Sigmoid colon (tissue), 7 donors: ENCODE measurements at regions of chr5 and their contacts with region 1.

Region 1: DNA sequence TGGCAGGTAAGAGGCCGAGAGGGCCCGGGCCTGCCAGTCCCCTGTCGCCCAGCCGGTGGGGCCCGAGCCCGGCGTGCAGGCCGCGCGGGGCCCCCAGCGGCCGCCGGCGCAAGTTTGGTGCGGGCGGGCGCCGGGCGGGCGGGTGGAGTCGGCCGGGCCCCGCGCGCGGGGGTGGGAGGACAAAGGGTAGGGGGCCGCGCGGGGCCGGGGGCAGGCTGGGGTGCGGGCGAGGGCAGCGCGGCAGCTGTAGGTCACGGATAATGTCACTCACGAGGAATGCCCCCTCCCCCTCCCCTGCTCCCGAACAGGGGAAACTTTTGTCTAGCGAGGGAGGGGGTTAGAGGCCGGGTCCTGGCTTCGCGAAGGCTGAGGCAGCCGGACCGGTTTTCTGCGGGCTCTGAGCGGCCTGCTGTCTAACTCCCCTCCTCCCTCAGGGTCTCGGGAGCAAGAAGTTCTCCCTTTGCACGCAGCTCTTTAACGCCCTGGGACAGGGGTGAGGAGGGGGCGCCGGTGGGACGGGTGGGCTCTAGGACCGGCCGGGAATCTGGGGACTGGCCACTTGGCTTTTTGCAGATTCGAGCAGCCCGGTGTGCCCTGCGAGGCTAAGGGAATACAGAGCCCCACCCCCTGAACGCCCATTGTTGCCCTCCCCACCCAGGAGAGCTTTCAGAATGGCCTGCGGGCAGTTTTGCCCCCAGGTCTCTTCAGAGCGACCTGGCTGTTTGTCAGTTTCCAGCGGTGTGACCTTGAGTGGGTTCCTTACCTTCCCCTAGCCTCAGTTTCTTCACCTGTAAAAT is 21.3 kb upstream of the NDST1 start:
- DNase-seq: no peak
- H3K4me3 ChIP-seq: peak overlapping the region; percentile 91 to 100 (median 98)
- H3K27ac ChIP-seq: peak overlapping the region; percentile 95 to 98 (median 96)
- H3K4me1 ChIP-seq: peaks cover 0 to 60% (median 57%) of the 10 kb centered on the region in 4 donors
- H3K27me3 ChIP-seq: no peaks in the 10 kb centered on the region
- CTCF ChIP-seq: no peak
- EP300 ChIP-seq: no peak
- POLR2A ChIP-seq: no peak

Region 2: DNA sequence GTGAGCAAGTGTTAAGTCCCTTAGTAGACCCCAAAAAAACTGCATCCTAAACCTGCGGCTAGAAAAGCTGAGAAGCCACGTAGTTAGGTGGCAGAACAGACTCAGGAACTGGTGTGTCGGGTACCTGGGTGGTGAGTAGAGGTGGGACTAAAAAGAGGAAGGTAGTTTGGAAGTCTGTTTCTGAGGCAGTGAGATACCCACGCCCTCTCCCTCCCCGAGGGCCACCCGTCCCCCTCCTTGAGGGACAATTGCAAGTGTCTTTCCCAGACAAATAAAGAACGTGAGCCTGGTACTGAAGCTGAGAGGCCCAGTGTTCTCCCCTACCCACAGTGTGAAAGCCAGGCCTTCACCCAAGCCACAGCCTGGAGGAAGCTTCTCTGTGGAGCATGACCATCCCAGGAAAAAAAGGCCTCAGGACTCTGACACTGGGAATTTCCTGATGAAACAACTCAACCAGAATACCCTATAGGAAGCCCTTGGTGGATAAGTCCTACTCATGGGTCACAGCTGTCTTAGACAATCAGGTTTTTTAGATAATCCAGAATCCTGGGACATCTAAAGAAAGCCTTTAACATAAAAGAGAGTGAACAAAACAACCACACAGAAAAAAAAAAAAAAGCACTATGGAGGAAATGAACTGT is 66.8 kb before region 1 on chr5:
- intact Hi-C with region 1: no loop called
- DNase-seq: no peak
- H3K4me3 ChIP-seq: no peak overlapping the region
- H3K27ac ChIP-seq: no peak overlapping the region
- H3K4me1 ChIP-seq: no peaks in the 10 kb centered on the region
- H3K27me3 ChIP-seq: no peaks in the 10 kb centered on the region
- CTCF ChIP-seq: no peak
- EP300 ChIP-seq: no peak
- POLR2A ChIP-seq: no peak

Region 3: DNA sequence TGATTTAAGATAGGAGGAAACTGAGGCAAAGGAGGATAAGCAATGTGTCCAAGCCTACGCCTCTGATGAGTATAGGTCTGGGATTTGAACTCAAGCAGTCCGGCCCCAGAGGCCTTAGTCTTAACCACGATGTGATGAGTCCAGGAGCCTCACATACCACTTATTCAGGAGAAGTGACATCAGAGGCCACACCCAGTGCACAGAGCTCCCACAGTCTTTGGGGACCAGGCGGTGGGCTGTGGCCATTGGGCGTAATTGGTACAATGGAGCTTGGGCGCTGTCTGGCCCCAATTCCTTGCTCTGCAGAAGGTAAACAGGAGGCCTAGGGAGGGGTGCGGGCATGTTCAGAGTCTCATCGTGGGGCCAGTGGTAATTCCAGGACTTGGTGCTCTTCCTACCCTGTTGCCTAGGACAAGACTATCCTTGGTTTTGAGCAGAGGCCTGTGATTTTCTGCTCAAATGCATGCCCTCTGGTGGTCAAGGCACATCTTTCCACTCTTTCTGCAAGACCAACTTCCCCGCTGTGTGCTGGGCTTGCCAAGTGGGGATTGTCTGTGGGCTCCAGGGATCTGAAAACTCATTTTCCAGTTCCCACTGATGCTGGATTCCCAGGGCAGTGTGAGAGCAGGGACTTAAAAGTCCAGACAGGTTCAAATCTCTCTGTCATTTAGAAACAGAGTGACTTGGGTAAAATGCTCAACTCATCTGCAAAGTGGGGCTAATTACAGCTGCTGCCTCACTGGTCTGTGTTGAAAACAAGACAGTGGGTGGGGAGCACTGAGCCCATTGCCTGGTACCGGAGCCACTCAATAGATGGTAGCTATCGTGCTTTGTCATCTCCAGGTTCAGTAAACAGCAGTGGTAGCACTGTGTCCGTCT is 37.1 kb after region 1 on chr5:
- intact Hi-C with region 1: loop called (anchors 1 kb)
- DNase-seq: no peak
- H3K4me3 ChIP-seq: no peak overlapping the region
- H3K27ac ChIP-seq: peak overlapping the region; percentile 11 to 31 (median 22)
- H3K4me1 ChIP-seq: peaks cover 0 to 78% (median 54%) of the 10 kb centered on the region in 4 donors
- H3K27me3 ChIP-seq: no peaks in the 10 kb centered on the region
- CTCF ChIP-seq: peak; percentile 49 to 68 (median 64)
- EP300 ChIP-seq: no peak
- POLR2A ChIP-seq: no peak

Region 4: DNA sequence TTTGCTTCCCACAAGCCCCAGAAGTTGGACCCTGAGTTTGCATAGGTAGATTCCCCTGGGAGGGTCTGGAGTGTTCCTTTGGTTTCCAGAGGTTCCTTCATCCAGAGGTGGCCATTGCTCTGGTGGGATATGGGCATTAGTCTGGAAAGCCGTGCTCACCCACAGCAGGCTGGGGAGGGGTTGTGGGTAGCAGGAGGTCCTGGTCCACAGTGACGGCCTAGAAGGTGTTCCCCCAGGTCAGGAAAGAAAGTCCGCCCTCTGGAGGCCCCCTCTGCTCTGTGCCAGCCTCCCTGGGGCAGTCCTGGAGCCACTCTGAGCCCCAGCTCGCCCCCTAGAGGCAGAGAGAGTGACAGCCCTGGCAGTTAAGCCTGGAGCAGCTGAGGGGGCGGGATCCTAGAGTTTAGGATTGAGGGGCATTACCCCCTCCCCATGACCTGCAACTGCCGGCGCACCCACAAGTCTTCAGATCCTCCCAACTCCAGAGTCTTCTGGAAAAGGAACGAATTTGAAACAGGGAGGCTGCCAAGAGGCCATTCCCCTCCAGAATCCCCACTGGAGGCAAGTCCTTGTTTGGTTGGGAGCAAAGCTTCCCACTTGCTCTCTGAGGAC is 58.1 kb after region 1 on chr5:
- intact Hi-C with region 1: loop called (anchors 5 kb)
- DNase-seq: peak; percentile 80
- H3K4me3 ChIP-seq: no peak overlapping the region
- H3K27ac ChIP-seq: no peak overlapping the region
- H3K4me1 ChIP-seq: peaks cover 0 to 24% (median 21%) of the 10 kb centered on the region in 4 donors
- H3K27me3 ChIP-seq: no peaks in the 10 kb centered on the region
- CTCF ChIP-seq: peak; percentile 18 to 83 (median 67)
- EP300 ChIP-seq: no peak
- POLR2A ChIP-seq: no peak